Head of caudate nucleus (tissue), 42 donors: ENCODE measurements at regions of chr12 and their contacts with region 1.

Region 1: GRCh38 chr12:12376646-12377448 is 20.0 kb downstream of the BORCS5 start:
- DNase-seq: peak in 7 of 42 donors; percentile 22 to 66 (median 49)

Region 2: GRCh38 chr12:12334367-12335040 is 42.3 kb before region 1 on chr12:
- intact Hi-C with region 1: no loop called
- DNase-seq: peak in 40 of 42 donors; percentile 19 to 82 (median 50)

Region 3: DNA sequence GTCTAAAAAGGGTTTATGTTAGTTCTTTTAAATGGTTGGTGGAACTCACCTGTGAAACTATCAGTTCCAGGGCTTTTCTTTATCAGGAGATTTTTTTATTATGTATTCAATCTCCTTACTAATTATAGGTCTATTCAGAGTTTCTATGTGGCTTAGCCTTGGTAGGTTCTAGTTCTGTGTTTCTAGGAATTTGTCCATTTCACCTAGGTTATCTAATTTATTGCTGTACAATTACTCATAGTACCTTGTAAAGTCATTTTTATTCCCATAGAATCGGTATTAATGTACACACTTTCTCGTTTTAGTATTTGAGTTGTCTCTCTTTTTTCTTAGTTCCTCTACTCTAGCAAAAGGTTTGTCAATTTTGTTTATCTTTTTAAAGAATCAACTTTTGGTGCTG is 39.0 kb after region 1 on chr12:
- intact Hi-C with region 1: no loop called
- DNase-seq: no peak

Region 4: GRCh38 chr12:12654691-12655460 is 278.0 kb after region 1 on chr12:
- intact Hi-C with region 1: loop called (anchors 5 kb)
- DNase-seq: no peak

Region 5: GRCh38 chr12:12696562-12697383 is 319.9 kb after region 1 on chr12:
- intact Hi-C with region 1: loop called (anchors 5 kb)
- DNase-seq: peak; percentile 85 to 96 (median 91)

Region 6: DNA sequence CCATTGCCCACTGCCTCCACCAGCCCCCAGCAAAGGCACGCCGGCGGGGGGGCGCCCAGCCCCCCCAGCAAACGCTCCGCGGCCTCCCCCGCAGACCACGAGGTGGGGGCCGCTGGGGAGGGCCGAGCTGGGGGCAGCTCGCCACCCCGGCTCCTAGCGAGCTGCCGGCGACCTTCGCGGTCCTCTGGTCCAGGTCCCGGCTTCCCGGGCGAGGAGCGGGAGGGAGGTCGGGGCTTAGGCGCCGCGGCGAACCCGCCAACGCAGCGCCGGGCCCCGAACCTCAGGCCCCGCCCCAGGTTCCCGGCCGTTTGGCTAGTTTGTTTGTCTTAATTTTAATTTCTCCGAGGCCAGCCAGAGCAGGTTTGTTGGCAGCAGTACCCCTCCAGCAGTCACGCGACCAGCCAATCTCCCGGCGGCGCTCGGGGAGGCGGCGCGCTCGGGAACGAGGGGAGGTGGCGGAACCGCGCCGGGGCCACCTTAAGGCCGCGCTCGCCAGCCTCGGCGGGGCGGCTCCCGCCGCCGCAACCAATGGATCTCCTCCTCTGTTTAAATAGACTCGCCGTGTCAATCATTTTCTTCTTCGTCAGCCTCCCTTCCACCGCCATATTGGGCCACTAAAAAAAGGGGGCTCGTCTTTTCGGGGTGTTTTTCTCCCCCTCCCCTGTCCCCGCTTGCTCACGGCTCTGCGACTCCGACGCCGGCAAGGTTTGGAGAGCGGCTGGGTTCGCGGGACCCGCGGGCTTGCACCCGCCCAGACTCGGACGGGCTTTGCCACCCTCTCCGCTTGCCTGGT is 340.1 kb after region 1 on chr12 and contains the start of gene CDKN1B:
- intact Hi-C with region 1: loop called (anchors 5 kb)
- DNase-seq: peak; percentile 86 to 97 (median 92)